ENCODE measurements at regions of chr19 and their contacts with region 1.

Region 1: GRCh38 chr19:17932485-17933338 is at the start of gene CCDC124:
- DNase-seq: peak; percentile 96
- ATAC-seq: peak; percentile 98
- H3K4me3 Mint-ChIP-seq: peak within 1 kb of the TSS; percentile 88
- H3K27ac Mint-ChIP-seq: peak within 1 kb of the TSS; percentile 92
- H3K4me1 Mint-ChIP-seq: peaks cover 18% of the 10 kb centered on the region
- H3K27me3 Mint-ChIP-seq: no peaks in the 10 kb centered on the region
- total RNA-seq, gene CCDC124: 99.3 to 131 TPM

Region 2: DNA sequence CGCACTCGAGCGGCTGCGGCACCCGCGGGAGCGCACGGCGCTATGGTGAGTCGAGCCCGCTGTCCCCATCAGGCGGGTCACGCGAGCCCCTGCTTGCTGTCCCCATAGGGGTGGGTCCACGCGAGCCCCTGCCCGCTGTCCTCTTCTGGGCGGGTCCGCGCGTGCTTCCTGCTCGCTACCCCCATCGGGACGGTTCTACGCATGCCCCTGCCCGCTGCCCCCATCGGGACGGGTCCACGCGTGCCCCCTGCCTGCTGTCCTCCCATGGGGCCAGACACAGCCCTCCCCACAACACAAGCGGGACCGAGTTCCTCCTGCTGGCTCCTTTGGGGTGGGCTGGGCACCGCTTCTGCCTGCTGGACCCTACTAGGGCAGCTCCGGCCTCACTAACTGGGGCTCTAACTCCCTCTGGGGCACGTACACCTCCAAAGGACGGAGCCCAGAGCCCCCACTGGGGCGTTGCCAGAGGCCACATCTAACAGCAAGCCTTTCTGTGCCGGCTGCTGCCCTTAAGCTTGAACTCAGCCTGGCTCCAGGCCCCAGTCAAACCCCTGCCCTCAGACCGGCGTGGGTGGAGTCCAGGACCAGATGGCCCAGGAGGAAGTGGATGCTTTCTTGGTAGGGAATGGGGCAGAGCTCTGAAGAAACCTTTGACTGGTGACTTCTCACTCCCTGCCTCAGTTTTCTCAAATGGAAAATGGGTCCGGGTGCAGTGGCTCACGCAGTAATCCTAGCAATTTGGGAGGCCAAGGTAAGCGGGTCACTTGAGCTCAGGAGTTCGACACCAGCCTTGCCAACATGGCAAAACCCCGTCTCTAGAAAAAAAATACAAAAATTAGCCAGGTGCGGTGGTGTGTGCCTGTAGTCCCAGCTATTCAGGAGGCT is 376.5 kb before region 1 on chr19:
- CTCF ChIA-PET with region 1: no interaction called
- POLR2A ChIA-PET with region 1: no interaction called
- intact Hi-C with region 1: no loop called
- DNase-seq: peak; percentile 45
- ATAC-seq: peak; percentile 14
- H3K4me3 Mint-ChIP-seq: peak overlapping the region; percentile 82
- H3K27ac Mint-ChIP-seq: peak overlapping the region; percentile 63
- H3K4me1 Mint-ChIP-seq: peaks cover 21% of the 10 kb centered on the region
- H3K27me3 Mint-ChIP-seq: no peaks in the 10 kb centered on the region

Region 3: DNA sequence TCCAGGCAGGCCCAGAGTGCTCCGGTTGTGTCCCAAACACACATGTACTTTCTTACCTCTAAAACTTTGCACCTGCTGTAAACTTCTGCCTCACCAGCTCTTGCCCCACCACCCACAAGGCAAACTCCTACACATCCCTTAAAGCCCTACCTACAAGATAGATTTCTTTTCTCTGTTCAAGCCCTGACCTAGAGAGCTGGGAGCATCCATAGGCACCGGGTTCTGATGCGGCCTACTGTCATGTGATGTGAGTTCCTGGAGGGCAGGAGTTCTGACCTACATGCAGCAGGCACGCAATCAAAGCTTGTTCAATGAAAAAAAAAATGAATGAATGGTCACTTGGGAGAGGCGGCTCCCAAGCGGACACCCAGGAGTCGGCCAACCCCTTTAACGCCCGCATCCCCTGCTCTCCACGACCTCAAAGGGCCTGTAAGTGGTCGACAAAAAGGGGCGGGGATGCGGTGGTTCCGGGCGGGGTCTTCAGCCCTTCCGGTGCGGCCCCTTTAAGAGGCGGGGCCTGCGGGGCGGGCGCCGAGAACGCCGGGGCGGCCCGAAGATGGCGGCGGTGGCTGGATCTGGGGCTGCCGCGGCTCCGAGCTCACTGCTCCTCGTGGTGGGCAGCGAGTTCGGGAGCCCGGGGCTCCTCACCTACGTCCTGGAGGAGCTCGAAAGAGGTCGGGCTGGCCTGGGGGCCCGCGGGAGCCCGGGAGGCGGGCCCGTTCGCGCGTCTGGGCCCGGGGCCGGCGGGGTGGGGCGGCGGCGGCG is 213.6 kb before region 1 on chr19 and contains the start of gene MAP1S:
- CTCF ChIA-PET with region 1: no interaction called
- POLR2A ChIA-PET with region 1: no interaction called
- intact Hi-C with region 1: loop called in 1 of 2 experiments (anchors 1 kb)
- DNase-seq: peak; percentile 86
- ATAC-seq: peak; percentile 83
- H3K4me3 Mint-ChIP-seq: peak within 1 kb of the TSS; percentile 81
- H3K27ac Mint-ChIP-seq: peak within 1 kb of the TSS; percentile 88
- H3K4me1 Mint-ChIP-seq: peaks cover 35% of the 10 kb centered on the region
- H3K27me3 Mint-ChIP-seq: no peaks in the 10 kb centered on the region
- total RNA-seq, gene MAP1S: 57.6 to 79.3 TPM

Region 4: DNA sequence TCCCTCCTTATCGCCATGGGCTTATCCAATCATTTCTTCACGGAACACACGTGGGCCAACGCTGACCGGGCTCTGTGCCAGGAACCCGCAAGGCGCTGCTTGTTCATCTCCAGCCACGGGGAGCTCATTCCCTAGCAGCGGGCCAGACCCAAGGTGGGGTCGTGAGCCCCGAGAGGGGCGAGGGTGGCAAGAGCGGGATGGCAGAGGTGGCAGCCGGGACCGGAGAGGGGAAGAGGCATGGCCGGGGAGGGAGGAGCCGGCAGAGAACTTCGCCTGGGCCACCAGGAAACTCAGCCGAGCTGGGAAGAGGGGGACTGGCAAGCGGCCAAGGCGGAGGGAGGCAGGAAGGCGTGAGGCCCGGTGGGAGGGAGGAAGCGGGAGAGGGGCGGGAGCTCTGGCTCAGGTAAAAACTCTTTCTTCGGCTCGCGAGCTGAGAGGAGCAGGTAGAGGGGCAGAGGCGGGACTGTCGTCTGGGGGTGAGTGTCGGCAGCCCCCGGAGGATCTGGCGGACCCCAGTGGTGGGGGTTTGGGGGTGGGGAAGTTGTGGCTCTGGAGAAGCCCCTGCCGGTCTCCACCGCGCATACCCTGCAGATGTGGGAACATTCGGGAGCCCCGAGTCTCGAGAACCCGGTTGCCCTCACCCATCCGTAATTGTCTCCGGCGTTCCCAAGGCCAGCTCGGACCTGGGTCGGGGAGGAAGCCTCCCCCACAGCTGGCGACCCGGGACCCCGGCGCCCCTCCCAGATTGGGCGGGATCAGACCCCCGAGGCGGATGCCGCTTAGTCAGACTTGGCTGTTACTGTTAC is 137.8 kb before region 1 on chr19 and contains the start of gene B3GNT3:
- CTCF ChIA-PET with region 1: interaction called, 8 read pairs
- POLR2A ChIA-PET with region 1: no interaction called
- intact Hi-C with region 1: loop called in 1 of 2 experiments (anchors 5 kb)
- DNase-seq: peak; percentile 56
- ATAC-seq: no peak
- H3K4me3 Mint-ChIP-seq: peak within 1 kb of the TSS; percentile 60
- H3K27ac Mint-ChIP-seq: peak within 1 kb of the TSS; percentile 19
- H3K4me1 Mint-ChIP-seq: peaks cover 57% of the 10 kb centered on the region
- H3K27me3 Mint-ChIP-seq: no peaks in the 10 kb centered on the region
- total RNA-seq, gene B3GNT3: 0.75 to 0.95 TPM

Region 5: DNA sequence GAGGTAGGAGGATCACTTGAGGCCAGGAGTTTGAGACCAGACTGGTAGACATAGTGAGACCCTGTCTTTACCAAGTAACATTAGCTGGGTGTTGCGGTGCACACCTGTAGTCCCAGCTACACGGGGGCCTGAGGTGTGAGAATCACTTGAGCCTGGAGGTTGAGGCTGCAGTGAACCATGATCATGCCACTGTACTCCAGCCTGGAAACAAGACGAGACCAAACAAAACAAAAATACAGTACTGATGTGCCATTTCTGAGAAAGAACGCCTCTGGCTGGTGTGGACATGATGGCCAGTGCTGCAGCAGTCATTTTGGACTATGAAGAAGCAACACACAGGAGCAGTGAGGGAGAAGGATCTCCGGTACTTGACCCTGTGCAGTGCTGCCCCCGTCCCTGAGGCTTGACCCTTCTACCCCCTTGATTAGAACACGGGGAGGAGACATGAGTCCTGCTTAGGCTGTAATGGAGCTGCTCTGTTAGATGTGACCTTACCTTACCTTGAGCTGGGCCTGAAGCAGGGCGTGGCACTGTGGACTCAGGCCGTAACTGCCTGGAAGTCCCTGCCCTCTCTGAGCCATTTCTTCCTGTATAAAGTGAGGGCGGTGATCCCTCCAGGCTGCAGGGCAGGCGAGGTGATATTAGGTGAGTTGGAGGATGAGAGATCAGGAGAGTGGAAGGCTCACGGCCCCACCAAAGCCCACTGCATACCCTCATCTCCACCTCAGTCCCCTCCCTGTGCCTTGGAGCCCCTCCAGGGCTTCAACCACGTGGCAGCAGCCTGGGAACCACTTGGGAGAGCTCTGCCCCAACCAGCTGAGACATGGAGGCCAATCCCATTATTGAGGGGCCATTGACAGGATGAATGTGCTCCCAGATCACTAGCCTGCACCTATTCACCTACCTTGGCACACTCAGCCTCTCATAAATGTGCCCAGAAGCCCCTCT is 67.1 kb before region 1 on chr19:
- CTCF ChIA-PET with region 1: interaction called, 102 read pairs
- POLR2A ChIA-PET with region 1: interaction called, 8 read pairs
- intact Hi-C with region 1: loop called (anchors 1 to 2 kb)
- DNase-seq: no peak
- ATAC-seq: peak; percentile 39
- H3K4me3 Mint-ChIP-seq: no peak overlapping the region
- H3K27ac Mint-ChIP-seq: peak overlapping the region; percentile 76
- H3K4me1 Mint-ChIP-seq: peaks cover 24% of the 10 kb centered on the region
- H3K27me3 Mint-ChIP-seq: no peaks in the 10 kb centered on the region

Region 6: GRCh38 chr19:17873786-17874757 is 58.6 kb before region 1 on chr19:
- CTCF ChIA-PET with region 1: interaction called, 24 read pairs
- POLR2A ChIA-PET with region 1: interaction called, 9 read pairs
- intact Hi-C with region 1: loop called (anchors 1 to 2 kb)
- DNase-seq: peak; percentile 89
- ATAC-seq: peak; percentile 83
- H3K4me3 Mint-ChIP-seq: peak overlapping the region; percentile 78
- H3K27ac Mint-ChIP-seq: peak overlapping the region; percentile 25
- H3K4me1 Mint-ChIP-seq: peaks cover 17% of the 10 kb centered on the region
- H3K27me3 Mint-ChIP-seq: no peaks in the 10 kb centered on the region

Region 7: GRCh38 chr19:18000935-18001778 is 68.4 kb after region 1 on chr19:
- CTCF ChIA-PET with region 1: interaction called, 102 read pairs
- POLR2A ChIA-PET with region 1: no interaction called
- intact Hi-C with region 1: no loop called
- DNase-seq: peak; percentile 95
- ATAC-seq: peak; percentile 84
- H3K4me3 Mint-ChIP-seq: peak overlapping the region; percentile 85
- H3K27ac Mint-ChIP-seq: peak overlapping the region; percentile 95
- H3K4me1 Mint-ChIP-seq: peaks cover 25% of the 10 kb centered on the region
- H3K27me3 Mint-ChIP-seq: no peaks in the 10 kb centered on the region

Measured in activated CD4-positive, alpha-beta T cell treated with anti-CD3 and anti-CD28 coated beads for 36 hours (primary cell).